Endothelial cell of umbilical vein (primary cell): ENCODE measurements at regions of chr1 and their contacts with region 1.

Region 1: GRCh38 chr1:179121159-179121938 is 39.5 kb downstream of the TOR3A start:
- DNase-seq: no peak
- H3K4me3 ChIP-seq: no peak overlapping the region
- H3K27ac ChIP-seq: no peak overlapping the region
- H3K4me1 ChIP-seq: peaks cover 13% of the 10 kb centered on the region
- H3K27me3 ChIP-seq: no peaks in the 10 kb centered on the region
- CTCF ChIP-seq: peak; percentile 25 to 39
- POLR2A ChIP-seq: no peak

Region 2: GRCh38 chr1:178796013-178796412 is 325.3 kb before region 1 on chr1:
- CTCF ChIA-PET with region 1: no interaction called
- POLR2A ChIA-PET with region 1: no interaction called
- dilution Hi-C with region 1: no loop called
- intact Hi-C with region 1: no loop called
- DNase-seq: no peak
- H3K4me3 ChIP-seq: no peak overlapping the region
- H3K27ac ChIP-seq: no peak overlapping the region
- H3K4me1 ChIP-seq: no peaks in the 10 kb centered on the region
- H3K27me3 ChIP-seq: no peaks in the 10 kb centered on the region
- CTCF ChIP-seq: no peak
- POLR2A ChIP-seq: no peak

Region 3: GRCh38 chr1:179105350-179105749 is 16.0 kb before region 1 on chr1:
- CTCF ChIA-PET with region 1: interaction called, 12 read pairs
- POLR2A ChIA-PET with region 1: interaction called, 4 read pairs
- dilution Hi-C with region 1: no loop called
- intact Hi-C with region 1: no loop called
- DNase-seq: no peak
- H3K4me3 ChIP-seq: no peak overlapping the region
- H3K27ac ChIP-seq: no peak overlapping the region
- H3K4me1 ChIP-seq: no peaks in the 10 kb centered on the region
- H3K27me3 ChIP-seq: no peaks in the 10 kb centered on the region
- CTCF ChIP-seq: peak; percentile 13 to 32
- POLR2A ChIP-seq: no peak